Activated naive CD4-positive, alpha-beta T cell treated with anti-CD3 and anti-CD28 coated beads for 36 hours (primary cell): ENCODE measurements at regions of chr5 and their contacts with region 1.

Region 1: DNA sequence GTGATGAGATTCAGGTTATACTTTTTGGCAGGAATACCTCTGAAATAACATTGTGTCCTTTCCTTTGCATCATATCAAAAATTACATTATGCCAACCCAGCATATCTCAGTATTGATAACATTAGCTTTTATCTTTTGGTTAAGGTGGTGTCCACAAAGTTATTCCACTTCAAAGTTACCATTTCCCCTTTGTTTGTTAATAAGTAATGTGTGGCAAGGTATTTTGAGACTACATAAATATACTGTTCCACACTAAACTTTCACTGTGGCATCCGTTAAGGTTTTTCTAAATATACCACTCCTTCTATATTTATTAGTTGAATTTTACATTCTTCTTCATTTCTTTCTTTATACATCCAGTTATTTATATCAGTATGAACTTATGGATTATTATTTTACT is 14.1 kb upstream of the ARHGEF37 start:
- DNase-seq: no peak
- H3K4me3 Mint-ChIP-seq: no peak overlapping the region
- H3K27ac Mint-ChIP-seq: no peak overlapping the region
- H3K4me1 Mint-ChIP-seq: peaks cover 15% of the 10 kb centered on the region
- H3K27me3 Mint-ChIP-seq: no peaks in the 10 kb centered on the region

Region 2: GRCh38 chr5:149387081-149387631 is 180.1 kb before region 1 on chr5:
- CTCF ChIA-PET with region 1: interaction called, 29 read pairs
- intact Hi-C with region 1: loop called (anchors 1 kb)
- DNase-seq: no peak
- H3K4me3 Mint-ChIP-seq: no peak overlapping the region
- H3K27ac Mint-ChIP-seq: no peak overlapping the region
- H3K4me1 Mint-ChIP-seq: peaks cover 4% of the 10 kb centered on the region
- H3K27me3 Mint-ChIP-seq: no peaks in the 10 kb centered on the region